Activated T-helper 1 cell treated with anti-CD3 and anti-CD28 coated beads, Interleukin-12 subunit alpha, Interleukin-12 subunit beta, Interleukin-2, Interleukin-4 antibody, amounts not matched to agents 30 ng/mL and 10 ng/mL and 1 ng/mL, durations not matched to agents 14 hours and 24 hours and 36 hours (primary cell): ENCODE measurements at regions of chr11 and their contacts with region 1.

Region 1: DNA sequence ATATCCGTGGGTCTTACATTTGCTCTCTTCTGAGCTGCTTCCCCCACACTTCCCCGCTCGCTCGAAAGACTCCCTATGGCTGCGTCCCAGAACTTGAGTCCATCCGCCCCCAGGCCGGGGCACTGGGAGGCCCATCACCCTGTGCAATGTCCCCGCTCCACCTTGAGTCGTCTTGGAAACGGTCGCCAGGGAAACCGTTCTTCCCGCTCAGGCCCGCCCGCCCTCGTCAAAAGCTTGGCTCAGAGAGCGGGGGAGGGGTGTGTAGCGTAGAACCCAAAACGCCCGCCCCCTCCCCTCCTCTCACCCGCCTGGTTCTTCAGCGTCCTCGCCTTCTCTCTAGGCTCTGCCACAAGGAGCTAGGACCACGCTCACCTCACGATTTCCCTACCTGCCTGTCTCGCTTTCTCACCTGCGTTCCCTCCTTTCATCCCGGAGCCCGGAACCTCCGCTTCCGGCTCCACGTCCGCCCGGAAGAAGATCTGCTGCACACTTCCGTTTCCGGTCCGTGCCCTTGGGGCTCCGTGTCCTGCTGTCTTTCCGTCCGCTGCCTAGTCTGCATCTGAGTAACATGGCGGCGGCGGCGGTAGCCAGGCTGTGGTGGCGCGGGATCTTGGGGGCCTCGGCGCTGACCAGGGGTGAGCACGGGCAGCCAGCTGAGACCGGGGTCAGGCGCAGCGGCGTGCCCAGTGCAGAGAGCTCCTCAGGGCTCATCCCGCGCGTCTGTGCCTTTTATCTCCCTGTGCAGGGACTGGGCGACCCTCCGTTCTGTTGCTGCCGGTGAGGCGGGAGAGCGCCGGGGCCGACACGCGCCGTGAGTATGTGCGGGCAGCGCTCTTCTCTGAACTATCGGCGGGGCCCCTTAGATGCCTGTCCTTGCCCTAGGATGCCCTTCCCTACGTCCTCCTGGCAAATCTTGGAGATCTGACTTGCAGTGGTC is at the starts of genes KBTBD4 and NDUFS3:
- DNase-seq: peak; percentile 89
- H3K4me3 Mint-ChIP-seq: peak within 1 kb of the TSS; percentile 96
- H3K27ac Mint-ChIP-seq: peak within 1 kb of the TSS; percentile 98
- H3K4me1 Mint-ChIP-seq: peaks cover 35% of the 10 kb centered on the region
- H3K27me3 Mint-ChIP-seq: no peaks in the 10 kb centered on the region
- total RNA-seq, gene KBTBD4: 16.3 and 19.0 TPM in 2 replicates
- total RNA-seq, gene NDUFS3: 148 and 152 TPM in 2 replicates

Region 2: GRCh38 chr11:47514825-47515647 is 63.8 kb before region 1 on chr11:
- intact Hi-C with region 1: loop called (anchors 2 kb)
- DNase-seq: no peak
- H3K4me3 Mint-ChIP-seq: peak overlapping the region; percentile 60
- H3K27ac Mint-ChIP-seq: peak overlapping the region; percentile 93
- H3K4me1 Mint-ChIP-seq: peaks cover 76% of the 10 kb centered on the region
- H3K27me3 Mint-ChIP-seq: no peaks in the 10 kb centered on the region

Region 3: DNA sequence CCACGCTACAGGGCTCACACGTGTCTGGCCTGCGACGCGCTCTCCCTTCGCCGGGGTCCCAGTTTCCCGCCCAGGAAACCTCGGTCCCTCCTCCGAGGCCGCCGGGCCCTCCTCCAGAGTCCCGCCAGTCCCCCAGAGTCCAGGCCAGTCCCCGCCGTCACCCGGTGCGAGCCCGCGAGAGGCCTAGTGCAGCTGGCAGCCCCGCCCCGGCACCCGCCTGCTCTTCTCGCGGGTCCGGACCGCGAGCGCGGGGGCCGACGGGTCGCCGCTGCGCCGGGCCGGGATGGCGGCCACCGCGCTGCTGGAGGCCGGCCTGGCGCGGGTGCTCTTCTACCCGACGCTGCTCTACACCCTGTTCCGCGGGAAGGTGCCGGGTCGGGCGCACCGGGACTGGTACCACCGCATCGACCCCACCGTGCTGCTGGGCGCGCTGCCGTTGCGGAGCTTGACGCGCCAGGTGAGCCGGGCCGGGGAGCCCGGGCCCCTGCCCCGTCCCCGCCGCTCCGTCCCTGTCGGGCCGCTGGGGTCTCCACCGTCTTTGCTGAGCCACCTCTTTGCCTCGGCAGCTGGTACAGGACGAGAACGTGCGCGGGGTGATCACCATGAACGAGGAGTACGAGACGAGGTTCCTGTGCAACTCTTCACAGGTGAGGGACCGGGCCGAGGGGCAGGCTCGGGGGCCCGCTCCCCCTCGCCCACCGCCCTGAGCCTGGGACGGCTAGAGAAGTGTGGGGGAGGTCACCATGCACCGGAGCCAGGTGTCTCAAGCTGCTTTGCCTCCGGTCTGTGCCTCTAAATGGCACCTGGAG is 13.2 kb before region 1 on chr11 and contains the start of gene PTPMT1:
- intact Hi-C with region 1: loop called (anchors 1 kb)
- DNase-seq: peak; percentile 60
- H3K4me3 Mint-ChIP-seq: peak within 1 kb of the TSS; percentile 86
- H3K27ac Mint-ChIP-seq: peak within 1 kb of the TSS; percentile 74
- H3K4me1 Mint-ChIP-seq: peaks cover 21% of the 10 kb centered on the region
- H3K27me3 Mint-ChIP-seq: no peaks in the 10 kb centered on the region
- total RNA-seq, gene PTPMT1: 57.5 and 60.6 TPM in 2 replicates

Region 4: GRCh38 chr11:47642099-47642855 is 63.5 kb after region 1 on chr11 and contains the start of gene MTCH2:
- intact Hi-C with region 1: loop called (anchors 1 kb)
- DNase-seq: peak; percentile 95
- H3K4me3 Mint-ChIP-seq: peak within 1 kb of the TSS; percentile 96
- H3K27ac Mint-ChIP-seq: peak within 1 kb of the TSS; percentile 97
- H3K4me1 Mint-ChIP-seq: peaks cover 30% of the 10 kb centered on the region
- H3K27me3 Mint-ChIP-seq: no peaks in the 10 kb centered on the region
- total RNA-seq, gene MTCH2: 116 and 118 TPM in 2 replicates